ENCODE measurements at regions of chr12 and their contacts with region 1.

Region 1: GRCh38 chr12:89051065-89051677 is 301.1 kb downstream of the DUSP6 start:
- DNase-seq: peak; percentile 88
- H3K4me3 ChIP-seq: no peak overlapping the region
- H3K27ac ChIP-seq: no peak overlapping the region
- H3K4me1 ChIP-seq: no peaks in the 10 kb centered on the region
- H3K27me3 ChIP-seq: no peaks in the 10 kb centered on the region
- CTCF ChIP-seq: peak; percentile 62
- POLR2A ChIP-seq: no peak

Region 2: DNA sequence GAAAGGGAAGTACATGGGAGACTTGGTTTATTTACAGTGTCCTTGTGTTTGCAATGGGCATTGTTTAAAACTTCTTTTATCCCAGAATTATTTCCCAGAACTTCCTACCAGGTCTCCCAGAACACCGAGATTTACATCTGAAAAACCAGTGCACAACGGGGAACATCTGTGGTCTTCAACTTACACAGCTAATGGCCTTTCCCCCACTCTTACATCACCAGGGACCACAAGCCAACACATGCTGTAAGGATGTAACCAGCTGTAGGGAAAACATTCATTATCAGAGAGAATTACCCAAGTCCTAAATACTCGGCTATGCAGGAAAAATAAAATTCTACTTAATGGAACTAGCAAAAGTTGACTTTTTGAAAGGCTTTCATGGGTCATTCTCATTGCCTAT is 33.6 kb after region 1 on chr12:
- CTCF ChIA-PET with region 1: interaction called, 3 read pairs
- POLR2A ChIA-PET with region 1: no interaction called
- dilution Hi-C with region 1: no loop called
- intact Hi-C with region 1: loop called (anchors 5 kb)
- DNase-seq: peak; percentile 56
- H3K4me3 ChIP-seq: no peak overlapping the region
- H3K27ac ChIP-seq: peak overlapping the region; percentile 69
- H3K4me1 ChIP-seq: peaks cover 48% of the 10 kb centered on the region
- H3K27me3 ChIP-seq: no peaks in the 10 kb centered on the region
- CTCF ChIP-seq: no peak
- POLR2A ChIP-seq: no peak

Region 3: DNA sequence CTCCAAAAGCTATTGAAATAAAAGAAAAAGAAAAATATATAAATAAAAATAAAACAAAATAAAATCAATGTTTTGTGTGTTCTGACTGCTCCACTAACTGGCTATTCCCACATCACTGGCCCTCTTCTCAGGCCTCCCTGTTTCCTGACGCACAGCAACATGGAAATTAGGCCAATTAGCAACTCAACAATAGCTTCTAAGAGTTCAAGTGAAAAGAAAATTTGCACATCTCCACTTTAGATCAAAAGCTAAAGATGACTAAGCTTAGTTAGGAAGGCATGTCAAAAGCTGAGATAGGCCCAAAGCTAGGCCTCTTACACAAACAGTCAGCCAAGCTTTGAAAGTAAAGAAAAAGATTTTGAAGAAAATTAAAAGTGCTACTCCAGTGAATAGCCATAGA is 100.4 kb after region 1 on chr12:
- CTCF ChIA-PET with region 1: no interaction called
- POLR2A ChIA-PET with region 1: no interaction called
- dilution Hi-C with region 1: no loop called
- intact Hi-C with region 1: no loop called
- DNase-seq: no peak
- H3K4me3 ChIP-seq: no peak overlapping the region
- H3K27ac ChIP-seq: no peak overlapping the region
- H3K4me1 ChIP-seq: peaks cover 13% of the 10 kb centered on the region
- H3K27me3 ChIP-seq: no peaks in the 10 kb centered on the region
- CTCF ChIP-seq: no peak
- POLR2A ChIP-seq: no peak

Region 4: DNA sequence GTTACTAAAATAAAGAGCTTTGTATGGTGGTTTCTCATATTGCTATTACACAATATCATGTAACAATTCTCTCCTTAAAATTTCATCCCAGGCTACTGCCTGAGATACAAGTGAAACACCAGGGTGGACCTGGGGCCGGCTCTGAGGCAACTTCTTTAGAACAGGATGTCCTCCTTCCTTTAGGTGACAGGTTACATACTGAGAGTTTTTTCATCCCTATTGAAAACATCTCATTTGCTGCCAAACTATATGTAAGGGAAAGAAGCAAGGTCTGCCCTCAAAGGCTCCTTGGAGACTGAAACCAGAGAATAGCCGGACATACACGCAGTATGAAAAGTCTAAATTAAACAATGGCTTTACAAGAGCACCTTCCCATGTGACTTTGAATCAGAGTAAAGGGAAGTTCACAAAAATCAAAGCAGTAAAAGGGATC is 161.2 kb after region 1 on chr12:
- CTCF ChIA-PET with region 1: no interaction called
- POLR2A ChIA-PET with region 1: no interaction called
- dilution Hi-C with region 1: no loop called
- intact Hi-C with region 1: loop called (anchors 5 kb)
- DNase-seq: peak; percentile 85
- H3K4me3 ChIP-seq: no peak overlapping the region
- H3K27ac ChIP-seq: peak overlapping the region; percentile 27
- H3K4me1 ChIP-seq: peaks cover 7% of the 10 kb centered on the region
- H3K27me3 ChIP-seq: no peaks in the 10 kb centered on the region
- CTCF ChIP-seq: no peak
- POLR2A ChIP-seq: no peak

Region 5: DNA sequence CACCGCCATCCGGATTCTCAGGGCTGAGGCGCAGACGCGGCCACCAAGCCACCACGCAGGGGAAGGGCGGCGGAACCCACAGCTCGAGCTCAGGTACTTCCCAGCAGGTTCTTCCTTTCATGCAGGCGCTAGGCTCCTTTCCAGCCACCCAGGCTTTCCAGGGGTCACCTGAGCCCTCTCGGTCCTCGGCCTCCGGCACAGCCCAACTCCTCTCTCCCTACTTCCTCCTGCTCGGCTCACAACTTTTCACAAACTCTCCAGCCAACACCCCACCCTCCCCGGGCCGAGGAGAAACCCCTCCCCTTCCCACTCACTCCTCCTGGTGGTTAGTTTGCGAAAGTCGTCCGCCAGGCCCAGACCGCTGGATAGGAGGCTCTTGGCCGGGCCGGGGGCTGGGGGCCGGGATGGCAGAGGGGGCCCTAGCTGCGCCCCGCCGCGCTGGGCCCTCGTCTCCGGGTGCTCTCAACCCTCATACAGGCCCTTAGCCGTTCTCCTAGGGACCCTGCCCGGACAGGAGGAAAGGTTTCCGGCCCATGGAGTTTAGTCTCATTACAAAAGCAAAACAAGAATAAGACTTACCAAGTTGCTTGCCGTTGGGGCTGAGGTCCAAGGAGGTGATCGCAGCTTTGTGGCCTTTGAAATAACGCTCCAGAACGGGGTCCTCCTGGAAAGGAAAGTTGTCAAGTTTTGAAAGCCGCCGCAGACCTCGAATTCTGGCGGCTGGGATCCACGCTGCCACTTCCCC is 473.5 kb after region 1 on chr12 and contains the start of gene GALNT4:
- CTCF ChIA-PET with region 1: interaction called, 3 read pairs
- POLR2A ChIA-PET with region 1: no interaction called
- dilution Hi-C with region 1: no loop called
- intact Hi-C with region 1: loop called (anchors 1 kb)
- DNase-seq: peak; percentile 92
- H3K4me3 ChIP-seq: peak within 1 kb of the TSS; percentile 16 to 92 (median 59)
- H3K27ac ChIP-seq: peak within 1 kb of the TSS; percentile 35
- H3K4me1 ChIP-seq: peaks cover 32% of the 10 kb centered on the region
- H3K27me3 ChIP-seq: no peaks in the 10 kb centered on the region
- CTCF ChIP-seq: peak; percentile 40 to 82
- POLR2A ChIP-seq: peak; percentile 25
- total RNA-seq, gene GALNT4: 9.8 and 10.9 TPM in 2 replicates